ENCODE measurements at regions of chr3 and their contacts with region 1.

Region 1: DNA sequence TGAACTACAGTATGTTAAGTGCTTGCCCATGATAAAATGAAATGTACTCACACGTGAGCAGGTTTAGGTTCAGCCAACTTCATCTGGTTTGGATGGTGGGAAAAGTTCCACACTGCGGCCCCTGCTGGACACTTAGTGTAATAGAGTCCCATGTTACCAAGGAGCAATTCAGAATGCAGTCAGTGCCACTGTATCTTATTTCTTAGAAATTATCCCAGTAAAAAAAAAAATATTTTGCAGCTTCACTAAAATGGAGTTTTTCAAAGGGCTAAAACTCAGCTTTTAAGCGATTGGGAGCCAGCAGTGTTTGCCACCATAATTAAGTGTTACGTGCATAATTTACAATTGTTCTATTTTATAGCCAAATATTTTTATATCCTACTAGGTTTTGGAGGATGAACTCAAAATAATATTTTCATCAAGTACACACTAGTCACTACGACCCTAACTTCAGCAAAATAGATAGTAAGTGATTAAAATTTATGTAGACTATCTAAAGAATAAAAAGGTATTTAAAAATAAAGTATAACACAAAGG is 371.7 kb upstream of the GBE1 start:
- H3K4me3 Mint-ChIP-seq: no peak overlapping the region
- H3K27ac Mint-ChIP-seq: no peak overlapping the region
- H3K4me1 Mint-ChIP-seq: peaks cover 29% of the 10 kb centered on the region
- H3K27me3 Mint-ChIP-seq: no peaks in the 10 kb centered on the region

Region 2: GRCh38 chr3:81490541-81491288 is 642.4 kb before region 1 on chr3:
- intact Hi-C with region 1: loop called (anchors 5 kb)
- H3K4me3 Mint-ChIP-seq: no peak overlapping the region
- H3K27ac Mint-ChIP-seq: no peak overlapping the region
- H3K4me1 Mint-ChIP-seq: peaks cover 20% of the 10 kb centered on the region
- H3K27me3 Mint-ChIP-seq: no peaks in the 10 kb centered on the region

Region 3: GRCh38 chr3:81581966-81582599 is 551.1 kb before region 1 on chr3:
- intact Hi-C with region 1: loop called (anchors 5 kb)
- H3K4me3 Mint-ChIP-seq: no peak overlapping the region
- H3K27ac Mint-ChIP-seq: no peak overlapping the region
- H3K4me1 Mint-ChIP-seq: no peaks in the 10 kb centered on the region
- H3K27me3 Mint-ChIP-seq: no peaks in the 10 kb centered on the region

Region 4: GRCh38 chr3:81666493-81667121 is 466.5 kb before region 1 on chr3:
- intact Hi-C with region 1: loop called (anchors 1 kb)
- H3K4me3 Mint-ChIP-seq: no peak overlapping the region
- H3K27ac Mint-ChIP-seq: no peak overlapping the region
- H3K4me1 Mint-ChIP-seq: no peaks in the 10 kb centered on the region
- H3K27me3 Mint-ChIP-seq: no peaks in the 10 kb centered on the region

Region 5: DNA sequence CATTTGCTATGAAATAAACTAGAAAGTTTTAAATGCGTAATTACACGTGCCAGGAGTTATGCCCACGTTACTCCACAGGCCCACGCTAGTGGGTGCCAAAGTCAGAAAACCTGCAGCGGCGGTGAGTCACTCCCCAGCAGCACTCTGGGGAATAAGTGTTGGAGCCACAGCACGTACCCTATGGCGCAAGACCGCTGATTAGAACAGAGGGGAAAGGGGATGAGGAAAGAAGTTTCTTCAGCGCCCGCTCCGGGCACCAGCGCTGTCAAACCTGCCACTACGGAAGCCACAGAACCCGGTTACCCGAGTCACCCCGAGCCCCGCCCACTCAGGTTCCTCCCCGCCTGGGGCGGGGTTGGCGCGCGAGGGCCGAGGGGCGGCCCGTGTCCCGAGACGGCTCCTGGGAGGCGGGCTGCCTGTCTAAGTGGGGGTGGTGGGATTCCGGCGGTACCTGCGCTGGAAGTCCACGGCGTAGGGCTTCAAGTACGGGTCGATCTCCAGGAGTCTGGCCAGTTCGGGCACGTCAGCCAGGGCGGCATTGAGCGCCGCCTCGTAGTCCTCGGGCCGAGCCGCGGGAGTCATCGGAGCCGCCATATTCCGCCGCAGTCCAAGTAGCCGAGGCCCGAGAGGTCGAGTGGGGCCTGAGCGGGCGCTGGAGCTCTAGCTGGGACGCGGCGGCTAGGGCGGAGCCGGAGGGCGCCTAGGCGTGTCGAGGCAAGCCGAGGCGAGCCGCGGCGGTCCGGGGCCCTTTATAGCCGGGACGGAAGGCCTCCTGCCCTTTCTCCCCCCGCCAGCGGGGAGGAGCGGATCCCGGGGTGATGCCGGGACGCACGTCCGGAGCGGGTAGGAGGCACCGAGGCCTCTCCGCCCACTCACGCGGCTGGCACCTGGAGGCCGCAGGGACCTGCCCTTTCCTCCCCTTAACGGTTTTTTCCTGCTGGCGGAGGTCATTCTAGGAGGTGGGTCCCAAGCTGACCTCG is 371.9 kb before region 1 on chr3 and contains the start of gene GBE1:
- intact Hi-C with region 1: loop called (anchors 5 kb)
- H3K4me3 Mint-ChIP-seq: peak within 1 kb of the TSS; percentile 88
- H3K27ac Mint-ChIP-seq: peak within 1 kb of the TSS; percentile 98
- H3K4me1 Mint-ChIP-seq: peaks cover 26% of the 10 kb centered on the region
- H3K27me3 Mint-ChIP-seq: no peaks in the 10 kb centered on the region

Region 6: GRCh38 chr3:81909796-81910195 is 223.3 kb before region 1 on chr3:
- intact Hi-C with region 1: loop called (anchors 10 kb)
- H3K4me3 Mint-ChIP-seq: no peak overlapping the region
- H3K27ac Mint-ChIP-seq: no peak overlapping the region
- H3K4me1 Mint-ChIP-seq: peaks cover 14% of the 10 kb centered on the region
- H3K27me3 Mint-ChIP-seq: no peaks in the 10 kb centered on the region

Region 7: GRCh38 chr3:82224661-82225060 is 91.5 kb after region 1 on chr3:
- intact Hi-C with region 1: no loop called
- H3K4me3 Mint-ChIP-seq: no peak overlapping the region
- H3K27ac Mint-ChIP-seq: no peak overlapping the region
- H3K4me1 Mint-ChIP-seq: no peaks in the 10 kb centered on the region
- H3K27me3 Mint-ChIP-seq: no peaks in the 10 kb centered on the region

Measured in dendritic cell treated with granulocyte-macrophage colony-stimulating factor and Interleukin-4, amounts not matched to agents 40 ng/mL and 50 ng/mL, for 4 days (primary cell).